Body of pancreas (tissue), 4 donors: ENCODE measurements at regions of chr6 and their contacts with region 1.

Region 1: DNA sequence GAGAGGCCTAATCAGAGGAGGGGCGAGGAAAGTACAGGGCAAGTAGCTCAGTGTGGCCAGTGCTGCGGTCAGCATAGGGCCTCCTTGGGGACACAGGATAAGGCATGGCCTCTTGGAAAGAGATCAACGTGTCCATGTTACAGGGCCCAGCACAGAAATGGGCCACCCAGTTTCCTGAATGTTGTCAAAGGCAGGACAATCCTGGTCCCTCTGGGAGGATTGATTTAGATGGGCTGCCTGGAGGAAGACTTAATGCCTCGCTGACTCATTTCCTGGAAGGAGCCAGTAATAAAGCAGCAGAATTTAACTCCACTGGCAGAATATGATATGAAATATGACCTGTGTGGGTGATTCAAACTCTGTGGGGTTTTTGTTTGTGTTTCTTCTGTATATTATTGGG is 16.6 kb downstream of the DDO start:
- DNase-seq: no peak
- ATAC-seq: no peak
- H3K4me3 ChIP-seq: no peak overlapping the region
- H3K27ac ChIP-seq: no peak overlapping the region
- H3K4me1 ChIP-seq: peaks cover 7% of the 10 kb centered on the region
- H3K27me3 ChIP-seq: no peaks in the 10 kb centered on the region
- CTCF ChIP-seq: no peak
- POLR2A ChIP-seq: no peak

Region 2: GRCh38 chr6:108872141-108872557 is 1526.6 kb before region 1 on chr6:
- intact Hi-C with region 1: no loop called
- DNase-seq: peak in 1 of 4 donors; percentile 19
- ATAC-seq: peak; percentile 4
- H3K4me3 ChIP-seq: no peak overlapping the region
- H3K27ac ChIP-seq: no peak overlapping the region
- H3K4me1 ChIP-seq: peaks cover under 1% of the 10 kb centered on the region
- H3K27me3 ChIP-seq: no peaks in the 10 kb centered on the region
- CTCF ChIP-seq: no peak
- POLR2A ChIP-seq: no peak

Region 3: DNA sequence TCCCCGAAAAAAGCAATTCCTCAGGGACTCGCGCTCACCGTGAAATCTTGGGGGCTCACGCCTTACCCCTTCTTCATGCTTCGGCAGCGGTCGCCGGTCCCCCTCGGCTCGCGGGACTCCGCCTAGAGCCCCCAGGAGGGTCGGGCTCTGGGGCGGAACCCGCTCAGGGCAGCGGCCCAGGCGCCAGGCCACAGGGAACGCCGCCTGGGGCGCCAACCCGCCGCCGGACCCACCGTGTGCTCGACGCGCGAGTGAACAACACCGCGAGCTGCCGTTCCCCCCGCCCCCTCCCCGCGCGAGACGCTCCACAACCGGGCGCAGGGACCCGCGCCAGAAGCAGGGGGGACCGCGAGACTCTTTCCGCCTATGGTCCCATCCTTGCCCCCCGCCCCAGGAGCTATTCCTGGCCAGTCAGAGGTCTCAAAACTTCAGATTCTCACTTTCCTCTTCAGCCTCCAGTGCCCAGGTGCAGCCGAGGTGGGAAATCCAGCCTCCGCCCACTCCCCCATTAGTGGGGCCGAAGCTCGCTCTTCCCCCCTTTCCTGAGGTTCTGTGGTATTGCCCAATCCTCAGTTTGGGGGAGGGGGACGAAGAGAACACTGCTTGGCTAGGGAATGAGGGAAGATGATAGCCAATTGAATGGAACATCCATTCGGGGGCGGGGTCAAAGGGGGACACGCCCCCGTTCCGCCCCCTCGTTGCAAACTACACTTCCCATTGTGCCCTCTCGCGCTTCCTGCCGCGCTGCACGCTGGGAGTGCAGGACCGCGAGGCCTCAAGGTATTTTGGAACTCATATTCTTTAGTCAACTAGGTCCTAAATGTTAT is 219.2 kb before region 1 on chr6 and contains the start of gene WASF1:
- intact Hi-C with region 1: loop called (anchors 10 kb)
- DNase-seq: peak; percentile 93 to 96 (median 94)
- ATAC-seq: peak; percentile 97
- H3K4me3 ChIP-seq: peak within 1 kb of the TSS; percentile 43 to 86
- H3K27ac ChIP-seq: peak within 1 kb of the TSS; percentile 63 to 85 (median 74)
- H3K4me1 ChIP-seq: peaks cover 34% of the 10 kb centered on the region
- H3K27me3 ChIP-seq: no peaks in the 10 kb centered on the region
- CTCF ChIP-seq: peak in 2 of 7 experiments; percentile 7 to 17
- POLR2A ChIP-seq: peak in 2 of 3 donors; percentile 16 to 27
- total RNA-seq, gene WASF1: 7.5 to 8.9 TPM

Region 4: GRCh38 chr6:110207652-110208051 is 191.1 kb before region 1 on chr6:
- intact Hi-C with region 1: no loop called
- DNase-seq: no peak
- ATAC-seq: no peak
- H3K4me3 ChIP-seq: no peak overlapping the region
- H3K27ac ChIP-seq: no peak overlapping the region
- H3K4me1 ChIP-seq: no peaks in the 10 kb centered on the region
- H3K27me3 ChIP-seq: no peaks in the 10 kb centered on the region
- CTCF ChIP-seq: no peak
- POLR2A ChIP-seq: no peak